WTC11 (cell line): ENCODE measurements at regions of chr9 and their contacts with region 1.

Region 1: DNA sequence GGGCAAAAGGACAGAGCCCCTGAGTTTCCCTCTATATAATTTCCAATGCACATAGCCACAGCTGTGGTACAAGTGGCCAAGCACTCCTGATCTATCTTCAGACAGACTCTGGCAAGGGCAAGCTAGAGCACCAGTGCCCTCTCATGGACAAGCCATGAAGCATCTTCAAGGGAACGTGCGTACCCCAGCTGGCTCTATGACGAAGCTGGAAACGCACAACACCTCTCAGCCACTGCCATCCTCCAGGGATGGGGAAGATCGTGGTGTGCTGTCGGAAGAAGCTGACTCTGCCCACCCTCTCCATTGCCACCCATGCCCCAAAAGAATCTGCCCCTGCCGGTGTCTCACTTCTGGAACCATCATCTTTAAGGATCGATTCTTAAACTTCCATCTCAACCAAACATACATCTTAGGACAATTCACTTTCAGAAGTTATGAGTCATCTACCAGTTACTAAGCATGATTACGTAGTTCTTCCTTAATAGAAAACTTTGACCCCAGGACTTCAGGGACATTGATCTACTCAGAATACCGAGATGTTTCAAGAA is 482.9 kb downstream of the AGTPBP1 start:
- DNase-seq: peak; percentile 75
- ATAC-seq: peak; percentile 100
- H3K4me3 Mint-ChIP-seq: no peak overlapping the region
- H3K27ac Mint-ChIP-seq: no peak overlapping the region
- H3K4me1 Mint-ChIP-seq: peaks cover 5% of the 10 kb centered on the region
- H3K27me3 Mint-ChIP-seq: no peaks in the 10 kb centered on the region
- CTCF ChIP-seq: peak; percentile 61

Region 2: DNA sequence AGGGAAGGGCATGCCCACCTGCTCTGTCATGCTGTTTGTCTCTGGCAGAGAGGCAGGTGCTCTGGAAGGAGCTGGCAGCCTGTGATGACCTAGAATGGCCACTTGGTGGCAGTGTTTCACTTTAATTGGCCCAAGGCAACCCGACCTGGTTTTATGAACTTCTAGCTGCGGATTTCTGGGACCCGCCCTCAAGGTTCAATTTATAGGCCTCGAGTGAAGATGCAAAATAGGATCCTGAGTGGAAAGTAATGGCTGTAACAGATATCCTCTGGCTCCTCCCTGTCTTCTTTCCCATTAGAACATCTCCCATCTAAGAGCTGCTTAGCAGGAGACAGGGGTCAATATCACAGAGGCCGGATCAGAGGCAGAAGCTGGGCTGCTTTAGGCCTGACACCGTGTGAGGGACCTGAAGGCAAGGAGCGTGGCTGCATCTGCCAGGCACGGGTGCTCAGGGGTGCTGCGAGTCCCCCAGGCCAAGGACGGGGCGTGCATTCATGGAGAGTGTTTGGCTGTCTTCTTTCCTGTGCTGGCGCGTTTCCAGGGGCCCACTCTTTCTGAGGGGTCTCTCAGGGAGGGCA is 861.7 kb before region 1 on chr9:
- CTCF ChIA-PET with region 1: interaction called, 14 read pairs
- POLR2A ChIA-PET with region 1: no interaction called
- DNase-seq: peak; percentile 77
- ATAC-seq: peak; percentile 90
- H3K4me3 Mint-ChIP-seq: no peak overlapping the region
- H3K27ac Mint-ChIP-seq: no peak overlapping the region
- H3K4me1 Mint-ChIP-seq: no peaks in the 10 kb centered on the region
- H3K27me3 Mint-ChIP-seq: no peaks in the 10 kb centered on the region; the same call in 1 of the 2 replicates
- CTCF ChIP-seq: peak; percentile 76

Region 3: GRCh38 chr9:84997472-84997871 is 261.4 kb before region 1 on chr9:
- CTCF ChIA-PET with region 1: interaction called, 23 read pairs
- POLR2A ChIA-PET with region 1: no interaction called
- DNase-seq: no peak
- ATAC-seq: peak; percentile 41
- H3K4me3 Mint-ChIP-seq: no peak overlapping the region
- H3K27ac Mint-ChIP-seq: no peak overlapping the region
- H3K4me1 Mint-ChIP-seq: peaks cover 16% of the 10 kb centered on the region
- H3K27me3 Mint-ChIP-seq: peaks cover 16% of the 10 kb centered on the region
- CTCF ChIP-seq: no peak

Region 4: GRCh38 chr9:85142968-85143367 is 115.9 kb before region 1 on chr9:
- CTCF ChIA-PET with region 1: interaction called, 17 read pairs
- POLR2A ChIA-PET with region 1: no interaction called
- DNase-seq: no peak
- ATAC-seq: peak; percentile 96
- H3K4me3 Mint-ChIP-seq: no peak overlapping the region
- H3K27ac Mint-ChIP-seq: no peak overlapping the region
- H3K4me1 Mint-ChIP-seq: peaks cover 10% of the 10 kb centered on the region
- H3K27me3 Mint-ChIP-seq: no peaks in the 10 kb centered on the region
- CTCF ChIP-seq: no peak